Left ventricle myocardium inferior (tissue), 1 donor: ENCODE measurements at regions of chr10 and their contacts with region 1.

Region 1: DNA sequence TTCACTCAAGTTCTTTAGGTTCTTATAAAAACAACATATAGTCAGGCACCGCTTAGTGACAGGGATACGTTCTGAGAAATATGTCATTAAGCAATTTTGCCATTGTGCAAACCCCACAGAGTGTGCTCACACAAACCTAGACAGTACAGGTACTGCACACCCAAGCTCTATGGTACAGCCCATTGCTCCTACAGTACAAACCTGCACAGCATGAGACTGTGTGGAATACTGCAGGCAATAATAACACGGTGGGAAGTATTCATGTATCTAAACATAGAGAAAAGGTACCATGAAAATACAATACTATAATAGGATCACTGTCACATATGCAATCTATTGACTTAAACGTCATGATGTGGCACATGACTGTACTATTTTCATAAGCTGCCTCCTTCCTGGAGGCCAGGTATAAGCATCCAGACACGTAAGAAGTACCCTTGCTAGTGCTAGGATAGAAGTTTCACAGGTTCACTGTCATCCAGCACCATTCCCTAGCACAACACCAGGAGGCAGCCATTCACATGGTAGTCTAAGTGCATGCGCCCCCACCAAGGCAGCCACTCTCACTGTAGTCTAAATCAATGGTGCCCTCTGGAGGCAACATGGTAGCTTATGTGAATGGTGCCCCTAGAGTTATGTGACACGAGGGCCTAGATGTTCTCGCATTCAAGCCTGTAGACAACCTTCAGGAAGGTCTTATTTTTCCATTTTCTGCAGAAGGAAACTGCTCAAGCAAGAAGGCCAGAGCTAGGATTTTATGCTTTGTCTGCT is 98.5 kb downstream of the ARHGAP22 start:
- DNase-seq: no peak
- H3K4me3 ChIP-seq: no peak overlapping the region
- H3K27ac ChIP-seq: no peak overlapping the region
- H3K4me1 ChIP-seq: peaks cover 21% of the 10 kb centered on the region
- H3K27me3 ChIP-seq: no peaks in the 10 kb centered on the region
- CTCF ChIP-seq: peak; percentile 38

Region 2: GRCh38 chr10:48363617-48364355 is 142.5 kb before region 1 on chr10:
- intact Hi-C with region 1: loop called (anchors 10 kb)
- DNase-seq: no peak
- H3K4me3 ChIP-seq: no peak overlapping the region
- H3K27ac ChIP-seq: peak overlapping the region; percentile 36
- H3K4me1 ChIP-seq: peaks cover 58% of the 10 kb centered on the region
- H3K27me3 ChIP-seq: no peaks in the 10 kb centered on the region
- CTCF ChIP-seq: peak; percentile 82

Region 3: DNA sequence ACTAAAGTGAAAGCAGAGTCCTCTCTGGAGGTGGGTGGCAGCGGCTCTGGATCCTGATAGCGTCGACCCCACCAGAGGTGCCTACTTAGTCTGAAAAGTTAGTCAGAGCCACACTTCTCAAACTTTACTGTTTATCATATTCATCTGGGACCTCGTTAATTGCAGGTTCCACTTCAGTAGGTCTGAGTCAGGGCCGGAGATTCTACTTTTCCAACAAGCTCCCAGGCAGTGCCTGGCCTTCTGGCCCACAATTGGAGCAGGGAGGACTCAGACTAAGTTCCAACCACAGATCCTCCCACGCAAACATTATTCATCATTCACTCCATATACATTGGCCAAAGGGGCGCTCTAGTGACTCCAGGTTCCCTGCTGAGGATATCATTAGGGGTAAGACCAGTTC is 530.9 kb after region 1 on chr10:
- intact Hi-C with region 1: no loop called
- DNase-seq: no peak
- H3K4me3 ChIP-seq: no peak overlapping the region
- H3K27ac ChIP-seq: no peak overlapping the region
- H3K4me1 ChIP-seq: no peaks in the 10 kb centered on the region
- H3K27me3 ChIP-seq: no peaks in the 10 kb centered on the region
- CTCF ChIP-seq: no peak